ENCODE measurements at regions of chr17 and their contacts with region 1.

Region 1: GRCh38 chr17:6913608-6914443 is 82.0 kb upstream of the ALOX12 start:
- DNase-seq: peak; percentile 31 to 62
- ATAC-seq: peak; percentile 42 to 74
- H3K4me3 ChIP-seq: peak overlapping the region; percentile 17 to 48 (median 39)
- H3K27ac ChIP-seq: no peak overlapping the region
- H3K4me1 ChIP-seq: peaks cover 0 to 6% of the 10 kb centered on the region in 2 donors
- H3K27me3 ChIP-seq: no peaks in the 10 kb centered on the region
- CTCF ChIP-seq: peak; percentile 64 to 87 (median 84)
- POLR2A ChIP-seq: no peak

Region 2: GRCh38 chr17:6815775-6816174 is 98.1 kb before region 1 on chr17:
- in situ Hi-C with region 1: no loop called
- intact Hi-C with region 1: no loop called
- DNase-seq: no peak
- ATAC-seq: no peak
- H3K4me3 ChIP-seq: no peak overlapping the region
- H3K27ac ChIP-seq: no peak overlapping the region
- H3K4me1 ChIP-seq: no peaks in the 10 kb centered on the region
- H3K27me3 ChIP-seq: peaks cover 0 to 4% (median 0%) of the 10 kb centered on the region in 3 donors
- CTCF ChIP-seq: no peak
- POLR2A ChIP-seq: no peak

Region 3: GRCh38 chr17:7004398-7005253 is 90.8 kb after region 1 on chr17:
- in situ Hi-C with region 1: loop called (anchors 5 kb)
- intact Hi-C with region 1: loop called (anchors 1 kb)
- DNase-seq: no peak
- ATAC-seq: peak; percentile 39 to 80
- H3K4me3 ChIP-seq: no peak overlapping the region
- H3K27ac ChIP-seq: no peak overlapping the region
- H3K4me1 ChIP-seq: no peaks in the 10 kb centered on the region
- H3K27me3 ChIP-seq: no peaks in the 10 kb centered on the region
- CTCF ChIP-seq: peak; percentile 42 to 74 (median 65)
- POLR2A ChIP-seq: no peak

Region 4: GRCh38 chr17:7021993-7022778 is 108.4 kb after region 1 on chr17:
- in situ Hi-C with region 1: no loop called
- intact Hi-C with region 1: loop called (anchors 1 kb)
- DNase-seq: peak; percentile 40 to 71
- ATAC-seq: peak; percentile 57
- H3K4me3 ChIP-seq: peak overlapping the region; percentile 30 to 49 (median 46)
- H3K27ac ChIP-seq: peak overlapping the region; percentile 93 to 99 (median 96)
- H3K4me1 ChIP-seq: peaks cover 28 to 38% of the 10 kb centered on the region in 2 donors
- H3K27me3 ChIP-seq: peaks cover 14 to 16% (median 15%) of the 10 kb centered on the region in 3 donors
- CTCF ChIP-seq: peak; percentile 92 to 98 (median 96)
- POLR2A ChIP-seq: peak; percentile 8 to 31

Region 5: DNA sequence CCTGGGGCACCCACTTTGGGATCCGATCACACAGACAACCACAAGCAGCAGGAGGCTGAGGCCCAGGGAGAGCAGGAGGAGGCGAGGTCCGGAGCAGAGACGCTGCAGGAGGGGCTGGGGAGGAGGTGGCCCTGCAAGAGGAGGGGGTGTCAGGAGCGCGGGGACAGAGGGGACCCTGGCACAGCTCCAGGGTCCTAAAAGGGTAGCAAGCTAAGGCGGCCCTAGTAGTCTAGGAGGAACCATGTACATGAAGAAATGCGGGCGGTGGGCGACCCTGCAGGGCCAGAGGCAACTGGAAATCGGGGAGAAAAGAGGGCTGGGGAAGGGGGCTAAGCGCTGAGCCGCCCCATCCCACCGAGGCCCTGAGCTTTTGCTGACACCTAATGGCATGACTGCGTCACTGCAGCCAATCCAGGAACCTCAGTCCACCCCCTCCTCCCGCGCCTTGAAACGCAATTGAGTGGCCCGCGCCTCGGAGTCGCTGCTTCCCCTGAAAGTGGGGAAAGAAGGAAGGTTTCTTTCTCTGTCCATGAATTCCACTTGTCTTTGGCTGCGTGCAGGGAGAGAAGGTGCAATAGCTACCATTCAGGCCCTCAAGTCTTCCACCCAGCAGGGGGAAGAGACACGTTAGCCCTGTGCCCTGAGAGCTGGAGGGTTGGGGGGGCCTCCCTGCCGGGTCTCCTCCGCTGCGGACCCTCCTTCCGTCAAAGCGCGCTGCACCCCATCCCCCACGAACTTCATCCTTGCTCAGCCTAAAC is 263.5 kb after region 1 on chr17:
- in situ Hi-C with region 1: loop called in 1 of 4 experiments (anchors 25 kb)
- intact Hi-C with region 1: no loop called
- DNase-seq: peak in 1 of 2 donors; percentile 31
- ATAC-seq: peak; percentile 74
- H3K4me3 ChIP-seq: peak overlapping the region; percentile 35 to 54 (median 44)
- H3K27ac ChIP-seq: no peak overlapping the region
- H3K4me1 ChIP-seq: peaks cover 8% of the 10 kb centered on the region in 2 donors
- H3K27me3 ChIP-seq: peaks cover 39 to 52% (median 45%) of the 10 kb centered on the region in 3 donors
- CTCF ChIP-seq: peak; percentile 32 to 86 (median 69)
- POLR2A ChIP-seq: no peak

Region 6: GRCh38 chr17:7557775-7558543 is 644.1 kb after region 1 on chr17:
- in situ Hi-C with region 1: no loop called
- intact Hi-C with region 1: no loop called
- DNase-seq: peak; percentile 70 to 80
- ATAC-seq: peak; percentile 38 to 46
- H3K4me3 ChIP-seq: peak overlapping the region; percentile 46 to 95 (median 48)
- H3K27ac ChIP-seq: peak overlapping the region; percentile 93 to 96 (median 96)
- H3K4me1 ChIP-seq: peaks cover 42 to 46% of the 10 kb centered on the region in 2 donors
- H3K27me3 ChIP-seq: no peaks in the 10 kb centered on the region
- CTCF ChIP-seq: no peak
- POLR2A ChIP-seq: peak; percentile 36 to 49